ENCODE measurements at regions of chr6 and their contacts with region 1.

Region 1: DNA sequence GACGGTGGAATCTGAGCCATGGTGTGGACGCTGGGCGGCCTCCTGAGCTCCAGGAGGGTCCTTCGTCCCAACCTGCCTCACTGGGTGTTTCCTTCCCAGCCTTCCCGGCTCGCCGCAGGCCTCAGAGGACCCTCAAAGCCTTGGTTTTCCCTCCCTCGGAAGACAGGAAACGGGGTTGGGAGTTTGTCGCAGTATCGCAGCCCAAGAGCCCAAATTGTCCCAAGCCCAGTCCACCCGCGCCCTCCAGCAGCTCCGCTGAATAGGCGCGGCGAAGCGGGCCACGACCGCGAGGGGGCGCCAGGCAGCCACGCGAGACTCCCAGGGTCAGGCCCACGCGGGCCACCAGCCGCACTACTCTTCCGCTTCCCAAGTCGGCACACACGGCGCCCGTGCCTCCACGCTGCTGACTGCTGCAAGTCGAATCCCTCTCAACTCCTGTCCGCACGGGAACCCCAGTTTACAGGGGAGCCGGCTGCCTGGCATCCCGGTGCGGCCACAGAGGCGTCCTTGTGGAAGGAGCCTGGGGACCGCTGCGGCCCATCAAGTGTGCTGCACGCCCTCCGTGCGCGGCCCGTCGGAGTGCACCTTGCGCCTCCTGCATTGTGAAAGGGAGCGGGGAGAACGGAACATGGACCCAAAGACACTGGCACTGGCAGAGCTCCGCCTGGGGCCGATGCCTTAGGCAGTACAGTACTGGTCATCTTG is 40.4 kb upstream of the HMGA1 start:
- DNase-seq: peak; percentile 18
- ATAC-seq: peak; percentile 97
- H3K4me3 ChIP-seq: peak overlapping the region; percentile 31 to 56
- H3K27ac ChIP-seq: peak overlapping the region; percentile 52
- H3K4me1 ChIP-seq: no peaks in the 10 kb centered on the region
- H3K27me3 ChIP-seq: no peaks in the 10 kb centered on the region
- CTCF ChIP-seq: peak; percentile 99

Region 2: DNA sequence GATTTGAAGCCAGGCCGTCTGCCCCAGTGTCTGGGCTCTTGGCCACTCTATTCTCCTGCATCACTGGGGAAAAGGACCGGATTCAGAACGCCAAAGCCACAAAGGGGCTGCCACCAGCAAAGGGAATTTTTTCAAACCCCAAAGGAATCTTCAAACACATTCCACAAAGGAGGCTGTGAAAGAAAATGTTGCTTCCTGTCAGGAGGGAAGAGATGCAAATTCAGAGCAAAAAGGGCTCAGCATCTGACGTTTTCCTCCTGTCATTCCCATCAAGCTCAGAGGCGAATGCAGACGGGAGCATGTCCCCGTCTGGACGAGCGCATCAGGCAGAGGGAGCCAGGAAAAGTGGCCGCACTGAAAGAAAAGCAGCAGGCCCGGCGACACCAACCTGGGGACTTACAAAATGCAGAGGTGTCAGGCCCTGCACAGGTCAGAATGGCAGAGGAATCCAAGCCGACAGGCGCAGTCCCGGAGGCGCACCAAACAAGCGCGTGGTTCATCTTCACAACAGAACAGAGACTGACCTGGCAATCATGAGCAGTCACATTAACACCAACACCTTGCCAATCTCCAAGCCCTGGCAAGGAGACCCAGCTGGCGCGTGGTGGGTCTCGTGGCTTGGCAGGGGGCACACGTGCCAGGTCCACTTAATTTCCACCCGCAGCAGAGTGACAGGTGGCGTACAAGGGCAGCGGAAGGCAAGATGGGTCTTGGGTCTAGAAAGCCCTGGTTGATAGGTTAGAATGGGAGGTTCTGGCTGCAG is 113.2 kb before region 1 on chr6:
- CTCF ChIA-PET with region 1: no interaction called
- POLR2A ChIA-PET with region 1: no interaction called
- in situ Hi-C with region 1: no loop called
- intact Hi-C with region 1: no loop called
- DNase-seq: no peak
- ATAC-seq: no peak
- H3K4me3 ChIP-seq: no peak overlapping the region
- H3K27ac ChIP-seq: no peak overlapping the region
- H3K4me1 ChIP-seq: no peaks in the 10 kb centered on the region
- H3K27me3 ChIP-seq: no peaks in the 10 kb centered on the region
- CTCF ChIP-seq: no peak

Region 3: DNA sequence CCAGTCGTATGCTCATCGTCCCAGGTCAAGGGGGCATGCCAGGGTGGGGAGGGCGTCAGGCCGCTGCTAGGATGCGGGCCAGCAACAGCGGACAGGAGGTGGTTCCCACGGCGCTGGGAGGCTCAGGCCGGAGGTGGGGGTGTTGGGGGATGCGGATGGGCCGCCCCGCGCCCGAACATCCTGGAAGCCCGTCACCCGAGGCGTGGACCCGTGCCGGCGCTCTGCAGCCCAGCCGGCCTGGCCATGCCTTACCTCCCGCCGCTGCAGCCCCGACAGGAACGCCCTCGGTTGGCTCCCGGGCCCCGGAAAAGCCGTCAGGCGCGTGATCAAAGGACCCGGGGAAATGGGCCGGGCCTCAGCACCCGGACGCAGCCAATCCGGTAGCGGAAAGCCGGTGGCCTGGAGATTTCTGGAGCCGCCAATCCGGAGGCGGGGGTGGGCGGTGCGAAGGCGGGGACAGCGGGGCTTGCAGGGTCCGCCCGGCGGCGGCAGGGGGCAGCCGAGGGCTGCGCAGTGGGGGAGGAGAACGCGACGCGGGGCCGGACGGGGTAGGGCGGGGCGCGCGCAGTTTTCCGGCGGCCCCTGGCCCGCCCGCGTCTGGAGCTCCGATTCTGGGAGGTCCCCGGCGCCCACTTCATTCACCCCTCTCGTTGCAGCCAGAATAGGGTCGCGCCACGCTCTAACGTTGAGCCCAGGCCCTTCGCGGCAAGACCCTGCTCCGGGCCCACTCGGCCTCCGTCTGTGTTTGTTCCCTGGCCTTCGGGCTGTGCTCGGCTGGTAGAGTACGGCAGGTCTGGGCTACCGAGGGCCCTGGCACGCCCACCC is 52.7 kb after region 1 on chr6 and contains the start of gene SMIM29:
- CTCF ChIA-PET with region 1: interaction called, 21 read pairs
- POLR2A ChIA-PET with region 1: interaction called, 8 read pairs
- in situ Hi-C with region 1: no loop called
- intact Hi-C with region 1: loop called (anchors 5 kb)
- DNase-seq: no peak
- ATAC-seq: peak; percentile 73
- H3K4me3 ChIP-seq: peak within 1 kb of the TSS; percentile 51 to 91
- H3K27ac ChIP-seq: peak within 1 kb of the TSS; percentile 89
- H3K4me1 ChIP-seq: peaks cover 47% of the 10 kb centered on the region
- H3K27me3 ChIP-seq: no peaks in the 10 kb centered on the region
- CTCF ChIP-seq: peak; percentile 98
- total RNA-seq, gene SMIM29: 35.6 TPM

Region 4: GRCh38 chr6:34295721-34296120 is 99.4 kb after region 1 on chr6:
- CTCF ChIA-PET with region 1: no interaction called
- POLR2A ChIA-PET with region 1: no interaction called
- in situ Hi-C with region 1: no loop called
- intact Hi-C with region 1: no loop called
- DNase-seq: no peak
- ATAC-seq: no peak
- H3K4me3 ChIP-seq: no peak overlapping the region
- H3K27ac ChIP-seq: no peak overlapping the region
- H3K4me1 ChIP-seq: no peaks in the 10 kb centered on the region
- H3K27me3 ChIP-seq: no peaks in the 10 kb centered on the region
- CTCF ChIP-seq: no peak